PC-3 (cell line): ENCODE measurements at regions of chr6 and their contacts with region 1.

Region 1: GRCh38 chr6:142045380-142046278 is 87.1 kb upstream of the GJE1 start:
- DNase-seq: peak; percentile 50
- ATAC-seq: no peak
- H3K4me3 ChIP-seq: no peak overlapping the region
- H3K27ac ChIP-seq: no peak overlapping the region
- H3K4me1 ChIP-seq: no peaks in the 10 kb centered on the region
- H3K27me3 ChIP-seq: no peaks in the 10 kb centered on the region
- CTCF ChIP-seq: peak; percentile 61; the same call in 1 of the 2 replicates

Region 2: DNA sequence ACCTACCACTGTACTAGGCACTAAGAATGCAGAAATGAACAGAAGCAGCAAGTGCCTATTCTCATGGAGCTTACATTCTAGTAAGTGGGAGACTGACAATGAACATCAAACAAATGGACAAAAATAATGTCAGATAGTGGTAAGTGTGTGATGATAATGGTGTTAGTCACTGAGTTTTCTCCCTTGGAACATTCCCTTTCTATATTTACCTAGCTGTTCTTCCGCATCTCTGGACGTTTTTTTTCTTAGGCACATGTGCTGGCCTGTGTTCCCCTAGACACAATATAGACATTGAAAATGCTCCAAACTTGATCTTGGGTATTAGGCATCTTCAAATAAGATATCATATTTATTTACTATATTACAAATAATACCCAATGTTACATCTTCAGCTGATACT is 131.0 kb before region 1 on chr6:
- CTCF ChIA-PET with region 1: no interaction called
- POLR2A ChIA-PET with region 1: no interaction called
- intact Hi-C with region 1: no loop called
- DNase-seq: peak; percentile 3
- ATAC-seq: no peak; the same call in 1 of the 2 replicates
- H3K4me3 ChIP-seq: no peak overlapping the region
- H3K27ac ChIP-seq: no peak overlapping the region
- H3K4me1 ChIP-seq: no peaks in the 10 kb centered on the region
- H3K27me3 ChIP-seq: no peaks in the 10 kb centered on the region
- CTCF ChIP-seq: no peak

Region 3: DNA sequence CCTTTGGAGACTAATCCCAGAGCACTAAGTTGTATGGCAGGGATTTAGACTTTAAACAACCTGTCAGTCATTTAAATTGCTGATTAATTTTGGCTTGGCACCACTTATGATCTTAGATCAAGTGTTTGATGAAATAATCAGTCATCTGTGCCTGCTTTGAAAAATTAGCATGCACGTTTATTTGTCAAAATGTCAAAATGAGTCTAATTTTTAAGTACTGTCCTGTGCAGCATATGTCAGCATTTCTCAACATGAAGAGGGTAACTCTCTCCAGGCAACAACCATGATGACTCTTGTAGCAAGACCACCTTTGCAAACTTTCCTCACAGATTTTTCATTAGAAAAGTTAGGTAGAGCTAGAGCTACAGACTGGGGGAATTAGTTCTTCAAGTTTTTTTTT is 68.6 kb before region 1 on chr6:
- CTCF ChIA-PET with region 1: no interaction called
- POLR2A ChIA-PET with region 1: no interaction called
- intact Hi-C with region 1: no loop called
- DNase-seq: no peak
- ATAC-seq: no peak
- H3K4me3 ChIP-seq: no peak overlapping the region
- H3K27ac ChIP-seq: no peak overlapping the region
- H3K4me1 ChIP-seq: peaks cover 9% of the 10 kb centered on the region
- H3K27me3 ChIP-seq: no peaks in the 10 kb centered on the region
- CTCF ChIP-seq: no peak

Region 4: GRCh38 chr6:141988954-141989705 is 56.5 kb before region 1 on chr6:
- CTCF ChIA-PET with region 1: no interaction called
- POLR2A ChIA-PET with region 1: no interaction called
- intact Hi-C with region 1: loop called (anchors 1 kb)
- DNase-seq: peak; percentile 77
- ATAC-seq: peak; percentile 54
- H3K4me3 ChIP-seq: no peak overlapping the region
- H3K27ac ChIP-seq: no peak overlapping the region
- H3K4me1 ChIP-seq: peaks cover 8% of the 10 kb centered on the region
- H3K27me3 ChIP-seq: no peaks in the 10 kb centered on the region
- CTCF ChIP-seq: peak; percentile 86

Region 5: DNA sequence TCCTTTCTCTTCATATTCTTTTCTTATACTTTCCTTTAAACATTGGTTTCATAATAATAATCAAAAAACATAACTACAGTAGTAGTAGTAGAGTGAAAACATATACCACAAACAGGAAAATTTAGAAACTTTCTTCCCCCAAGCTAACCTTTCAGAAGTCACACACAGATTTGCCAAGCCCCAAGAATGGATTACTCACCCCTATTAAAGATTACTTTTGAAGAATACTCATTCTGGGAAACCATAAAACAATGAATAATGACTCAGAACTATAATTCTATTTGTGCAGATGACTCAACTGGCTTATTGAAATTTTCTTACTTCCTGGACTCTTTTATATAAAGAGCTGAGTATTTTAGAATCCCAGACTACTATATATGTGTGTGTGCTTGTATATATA is 32.3 kb before region 1 on chr6:
- CTCF ChIA-PET with region 1: no interaction called
- POLR2A ChIA-PET with region 1: no interaction called
- intact Hi-C with region 1: loop called (anchors 5 kb)
- DNase-seq: peak; percentile 91
- ATAC-seq: peak; percentile 63
- H3K4me3 ChIP-seq: no peak overlapping the region
- H3K27ac ChIP-seq: peak overlapping the region; percentile 100
- H3K4me1 ChIP-seq: peaks cover 61% of the 10 kb centered on the region
- H3K27me3 ChIP-seq: no peaks in the 10 kb centered on the region
- CTCF ChIP-seq: no peak

Region 6: GRCh38 chr6:142112451-142113061 is 66.9 kb after region 1 on chr6:
- CTCF ChIA-PET with region 1: no interaction called
- POLR2A ChIA-PET with region 1: no interaction called
- intact Hi-C with region 1: loop called (anchors 5 kb)
- DNase-seq: peak; percentile 84
- ATAC-seq: no peak
- H3K4me3 ChIP-seq: no peak overlapping the region
- H3K27ac ChIP-seq: no peak overlapping the region
- H3K4me1 ChIP-seq: no peaks in the 10 kb centered on the region
- H3K27me3 ChIP-seq: no peaks in the 10 kb centered on the region
- CTCF ChIP-seq: peak; percentile 78

Region 7: GRCh38 chr6:142195862-142196541 is 150.4 kb after region 1 on chr6:
- CTCF ChIA-PET with region 1: no interaction called
- POLR2A ChIA-PET with region 1: no interaction called
- intact Hi-C with region 1: no loop called
- DNase-seq: peak; percentile 63
- ATAC-seq: peak; percentile 77
- H3K4me3 ChIP-seq: peak overlapping the region; percentile 37; the same call in 1 of the 2 replicates
- H3K27ac ChIP-seq: peak overlapping the region; percentile 40
- H3K4me1 ChIP-seq: peaks cover 24% of the 10 kb centered on the region
- H3K27me3 ChIP-seq: no peaks in the 10 kb centered on the region
- CTCF ChIP-seq: no peak

Region 8: DNA sequence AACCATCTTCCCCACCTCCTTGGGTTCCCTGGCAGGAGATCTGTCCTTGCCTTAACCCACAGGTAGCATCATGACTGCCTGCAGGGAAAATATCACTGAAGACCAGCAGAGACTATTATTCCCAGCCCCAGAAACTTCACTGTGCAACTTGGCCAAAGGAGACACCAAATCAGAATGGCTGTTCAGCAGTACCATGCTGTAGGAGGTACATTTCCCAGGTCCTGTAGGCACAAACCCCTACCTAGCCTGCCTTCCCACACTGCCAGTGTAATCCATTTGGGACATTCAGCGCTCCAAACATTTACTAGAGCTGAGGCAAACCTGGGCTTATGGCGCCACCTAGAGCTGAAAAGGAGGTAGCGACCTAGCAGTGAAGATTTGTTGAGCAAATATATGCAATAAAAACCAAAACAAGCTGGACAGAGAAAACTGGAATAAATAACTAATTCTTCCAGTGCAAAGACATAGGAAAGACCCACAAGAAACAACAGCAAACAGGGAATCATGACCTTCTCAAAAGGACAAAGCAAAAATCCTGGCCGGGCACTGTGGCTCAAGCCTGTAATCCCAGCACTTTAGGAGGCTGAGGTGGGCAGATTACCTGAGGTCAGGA is 161.7 kb after region 1 on chr6:
- CTCF ChIA-PET with region 1: no interaction called
- POLR2A ChIA-PET with region 1: no interaction called
- intact Hi-C with region 1: no loop called
- DNase-seq: peak; percentile 69
- ATAC-seq: peak; percentile 79
- H3K4me3 ChIP-seq: no peak overlapping the region
- H3K27ac ChIP-seq: no peak overlapping the region
- H3K4me1 ChIP-seq: no peaks in the 10 kb centered on the region
- H3K27me3 ChIP-seq: no peaks in the 10 kb centered on the region
- CTCF ChIP-seq: peak; percentile 80